ENCODE measurements at regions of chr6 and their contacts with region 1.

Region 1: DNA sequence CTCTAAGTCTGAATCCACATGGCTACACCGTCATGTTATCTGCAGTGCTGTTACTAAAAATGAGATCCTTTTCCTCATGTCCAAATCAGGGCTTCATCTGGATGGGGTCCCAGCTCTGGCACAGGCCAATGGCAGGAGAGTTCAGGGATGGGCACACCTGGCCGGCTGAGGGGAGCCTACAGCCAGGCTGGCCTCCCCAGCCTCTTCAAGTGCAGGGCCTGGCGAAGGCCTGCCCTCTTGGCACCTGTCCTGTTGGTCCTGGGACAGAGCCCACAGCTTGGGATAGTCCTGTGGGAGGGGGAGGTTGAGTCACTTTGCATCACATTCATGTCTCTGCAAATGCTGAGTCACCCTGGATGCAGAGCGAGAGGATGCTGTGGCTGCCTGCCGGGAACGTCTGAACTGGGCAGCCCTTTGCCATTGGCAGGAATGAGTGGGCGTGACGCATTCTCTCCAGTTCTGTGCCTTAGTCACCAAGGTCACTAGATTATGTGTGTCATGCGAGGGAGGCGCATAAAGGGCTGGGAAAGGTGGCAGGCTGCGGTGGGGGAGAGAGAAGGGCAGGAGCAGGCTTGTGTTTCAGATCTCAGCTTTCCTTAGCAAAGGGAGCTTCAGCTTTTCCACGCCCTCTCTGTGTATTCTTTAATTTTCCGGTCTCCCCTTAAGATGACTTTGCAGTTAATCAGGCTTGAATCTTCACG is 223.2 kb upstream of the ECI2 start:
- DNase-seq: peak; percentile 55 to 96 (median 76)

Region 2: GRCh38 chr6:4936681-4937041 is 578.1 kb after region 1 on chr6:
- intact Hi-C with region 1: loop called (anchors 10 kb)
- DNase-seq: peak in 1 of 10 donors; percentile 2

Measured in posterior cingulate gyrus (tissue), 11 donors.